ENCODE measurements at regions of chr5 and their contacts with region 1.

Region 1: DNA sequence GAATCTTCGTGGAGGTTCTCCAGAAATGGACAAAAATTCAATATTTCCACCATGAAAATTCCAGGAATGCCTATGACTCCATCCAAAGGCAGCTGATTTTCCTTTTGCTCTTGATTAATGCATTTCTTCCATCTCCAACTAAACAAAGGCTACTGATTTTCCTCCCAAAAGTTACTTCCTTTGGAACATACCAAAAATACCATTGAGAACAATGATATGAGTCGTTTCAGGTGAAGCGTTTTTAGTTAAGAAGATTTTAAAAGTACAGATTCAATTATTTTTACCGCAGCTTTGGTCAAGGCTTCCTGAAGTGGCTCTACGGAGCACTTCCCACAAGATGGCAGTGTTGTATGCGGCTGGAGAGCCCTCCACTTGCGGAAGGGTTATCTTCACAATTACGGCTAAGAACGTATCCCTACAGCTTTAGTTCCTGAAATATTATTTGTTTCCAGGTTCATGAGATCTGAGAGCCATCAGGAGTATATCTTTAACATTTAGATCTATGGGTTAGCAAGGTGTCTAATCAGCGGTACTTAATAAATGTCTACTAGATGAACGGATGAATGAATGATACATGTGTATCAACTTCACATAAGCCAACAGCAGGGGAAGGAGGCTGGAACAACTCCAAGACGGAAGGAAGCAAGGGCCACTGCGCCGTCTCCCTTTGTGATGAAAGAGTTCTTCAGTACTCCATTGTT is 35.9 kb upstream of the ARSB start:
- DNase-seq: peak; percentile 34
- CTCF ChIP-seq: peak; percentile 82

Region 2: GRCh38 chr5:79042188-79042587 is 21.2 kb after region 1 on chr5:
- CTCF ChIA-PET with region 1: interaction called, 60 read pairs
- POLR2A ChIA-PET with region 1: no interaction called
- DNase-seq: no peak
- CTCF ChIP-seq: no peak

Region 3: GRCh38 chr5:79062436-79062835 is 41.4 kb after region 1 on chr5:
- CTCF ChIA-PET with region 1: interaction called, 10 read pairs
- POLR2A ChIA-PET with region 1: no interaction called
- DNase-seq: no peak
- CTCF ChIP-seq: no peak

Region 4: DNA sequence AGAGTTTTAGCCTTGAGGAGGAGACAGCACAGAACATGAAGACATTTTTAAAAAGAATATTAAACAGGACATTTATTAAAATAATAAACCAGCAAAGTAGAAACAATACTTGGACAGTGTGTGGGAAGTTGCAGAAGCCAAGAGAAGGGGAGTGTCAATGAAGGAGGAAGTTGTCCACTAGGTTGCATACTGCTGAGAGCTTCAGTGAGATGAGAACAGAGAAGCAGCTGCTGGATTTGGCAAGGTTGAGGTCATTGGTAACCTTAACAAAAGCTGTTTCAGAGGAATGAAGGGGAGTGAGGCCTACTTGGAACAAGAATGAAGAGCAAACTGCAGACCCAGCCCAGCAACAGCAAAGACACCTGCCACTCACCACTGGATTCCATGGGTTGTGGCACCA is 102.0 kb after region 1 on chr5:
- CTCF ChIA-PET with region 1: interaction called, 12 read pairs
- POLR2A ChIA-PET with region 1: no interaction called
- DNase-seq: no peak
- CTCF ChIP-seq: no peak

Region 5: GRCh38 chr5:79464695-79465332 is 443.8 kb after region 1 on chr5:
- CTCF ChIA-PET with region 1: interaction called, 73 read pairs
- POLR2A ChIA-PET with region 1: no interaction called
- DNase-seq: peak; percentile 45
- CTCF ChIP-seq: peak; percentile 58